Activated CD4-positive, alpha-beta T cell treated with anti-CD3 and anti-CD28 coated beads for 36 hours (primary cell): ENCODE measurements at regions of chr9 and their contacts with region 1.

Region 1: GRCh38 chr9:136170006-136170901 is 34.7 kb downstream of the LHX3 start:
- DNase-seq: peak; percentile 80
- ATAC-seq: peak; percentile 88
- H3K4me3 Mint-ChIP-seq: no peak overlapping the region
- H3K27ac Mint-ChIP-seq: no peak overlapping the region
- H3K4me1 Mint-ChIP-seq: no peaks in the 10 kb centered on the region
- H3K27me3 Mint-ChIP-seq: peaks cover 6% of the 10 kb centered on the region

Region 2: GRCh38 chr9:136225748-136226679 is 55.8 kb after region 1 on chr9:
- CTCF ChIA-PET with region 1: no interaction called
- POLR2A ChIA-PET with region 1: no interaction called
- intact Hi-C with region 1: loop called in 1 of 2 experiments (anchors 1 kb)
- DNase-seq: peak; percentile 84
- ATAC-seq: peak; percentile 88
- H3K4me3 Mint-ChIP-seq: peak overlapping the region; percentile 24
- H3K27ac Mint-ChIP-seq: peak overlapping the region; percentile 44
- H3K4me1 Mint-ChIP-seq: peaks cover 20% of the 10 kb centered on the region
- H3K27me3 Mint-ChIP-seq: no peaks in the 10 kb centered on the region